CD4-positive, alpha-beta T cell (primary cell): ENCODE measurements at regions of chr9 and their contacts with region 1.

Region 1: DNA sequence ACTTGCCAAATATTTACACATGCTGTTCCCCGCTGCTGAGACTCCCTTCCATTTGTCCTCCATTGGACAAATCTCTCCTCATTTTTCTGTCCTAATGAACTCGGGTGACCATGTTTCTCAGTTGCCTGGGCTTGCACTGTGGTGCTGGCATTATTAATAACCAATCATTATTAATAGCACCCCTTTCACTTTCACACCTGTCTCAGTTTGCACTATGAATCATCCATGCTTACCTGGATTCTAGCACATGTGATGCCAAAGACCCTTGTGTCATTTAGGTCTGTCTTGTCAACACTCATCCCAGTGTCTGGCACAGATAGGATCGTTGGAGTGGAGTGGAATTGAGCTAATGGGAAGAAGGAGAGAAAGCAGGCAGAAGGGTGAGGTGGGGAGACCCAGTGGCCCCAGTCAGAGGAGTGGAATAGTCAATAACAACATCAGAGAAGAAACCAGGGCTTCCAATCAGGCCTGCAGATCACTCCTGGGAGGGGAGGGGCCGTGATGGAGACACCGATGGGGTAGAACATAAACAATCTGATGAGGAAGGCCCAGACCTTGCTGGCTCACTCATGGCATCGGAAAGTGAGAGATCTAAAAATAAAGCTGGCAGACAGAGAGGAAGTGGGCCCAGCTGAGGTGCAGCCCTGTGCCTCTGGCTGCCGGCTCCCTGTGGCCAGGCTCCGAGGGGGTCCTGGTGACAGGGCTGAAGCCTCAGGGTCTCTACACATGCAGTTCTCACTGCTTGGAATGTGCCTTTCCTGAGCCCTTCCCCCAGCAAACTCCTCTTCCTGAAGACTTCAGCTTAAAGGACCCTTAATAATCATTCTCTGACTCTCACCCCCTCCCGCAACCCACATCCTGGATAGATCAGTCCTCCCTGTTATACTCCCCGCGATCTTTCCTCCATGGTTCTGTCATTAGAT is 33.5 kb upstream of the CRB2 start:
- DNase-seq: peak; percentile 36 to 82 (median 63)
- ATAC-seq: peak; percentile 85
- H3K4me3 ChIP-seq: peak overlapping the region; percentile 33
- H3K4me3 Mint-ChIP-seq: peak overlapping the region; percentile 38
- H3K27ac ChIP-seq: peak overlapping the region; percentile 66 to 73
- H3K27ac Mint-ChIP-seq: peak overlapping the region; percentile 97
- H3K4me1 ChIP-seq: peaks cover 32% of the 10 kb centered on the region
- H3K4me1 Mint-ChIP-seq: peaks cover 45% of the 10 kb centered on the region
- H3K27me3 ChIP-seq: no peaks in the 10 kb centered on the region
- H3K27me3 Mint-ChIP-seq: no peaks in the 10 kb centered on the region
- CTCF ChIP-seq: no peak

Region 2: DNA sequence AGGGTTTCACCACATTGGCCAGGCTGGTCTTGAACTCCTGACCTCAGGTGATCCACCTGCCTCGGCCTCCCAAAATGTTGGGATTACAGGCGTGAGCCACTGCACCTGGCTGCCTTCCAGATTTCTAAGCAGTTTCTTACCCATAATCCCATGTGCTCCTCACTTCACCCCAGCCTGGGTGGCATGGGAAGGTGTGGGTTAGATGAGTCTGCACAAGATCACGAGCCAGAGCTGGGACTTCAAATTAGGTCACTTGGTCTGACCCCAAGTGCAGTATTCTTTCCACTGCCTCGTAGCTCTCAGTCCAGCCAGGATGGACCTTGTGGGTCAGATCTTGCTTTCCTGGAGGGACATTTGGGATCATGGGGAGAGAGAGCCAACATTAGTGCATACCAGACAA is 16.7 kb before region 1 on chr9:
- CTCF ChIA-PET with region 1: no interaction called
- POLR2A ChIA-PET with region 1: interaction called, 16 read pairs
- intact Hi-C with region 1: loop called in 1 of 2 experiments (anchors 2 kb)
- DNase-seq: no peak
- ATAC-seq: no peak
- H3K4me3 ChIP-seq: no peak overlapping the region
- H3K4me3 Mint-ChIP-seq: no peak overlapping the region
- H3K27ac ChIP-seq: no peak overlapping the region
- H3K27ac Mint-ChIP-seq: peak overlapping the region; percentile 81
- H3K4me1 ChIP-seq: peaks cover 33% of the 10 kb centered on the region
- H3K4me1 Mint-ChIP-seq: peaks cover 37% of the 10 kb centered on the region
- H3K27me3 ChIP-seq: no peaks in the 10 kb centered on the region
- H3K27me3 Mint-ChIP-seq: no peaks in the 10 kb centered on the region
- CTCF ChIP-seq: no peak

Region 3: DNA sequence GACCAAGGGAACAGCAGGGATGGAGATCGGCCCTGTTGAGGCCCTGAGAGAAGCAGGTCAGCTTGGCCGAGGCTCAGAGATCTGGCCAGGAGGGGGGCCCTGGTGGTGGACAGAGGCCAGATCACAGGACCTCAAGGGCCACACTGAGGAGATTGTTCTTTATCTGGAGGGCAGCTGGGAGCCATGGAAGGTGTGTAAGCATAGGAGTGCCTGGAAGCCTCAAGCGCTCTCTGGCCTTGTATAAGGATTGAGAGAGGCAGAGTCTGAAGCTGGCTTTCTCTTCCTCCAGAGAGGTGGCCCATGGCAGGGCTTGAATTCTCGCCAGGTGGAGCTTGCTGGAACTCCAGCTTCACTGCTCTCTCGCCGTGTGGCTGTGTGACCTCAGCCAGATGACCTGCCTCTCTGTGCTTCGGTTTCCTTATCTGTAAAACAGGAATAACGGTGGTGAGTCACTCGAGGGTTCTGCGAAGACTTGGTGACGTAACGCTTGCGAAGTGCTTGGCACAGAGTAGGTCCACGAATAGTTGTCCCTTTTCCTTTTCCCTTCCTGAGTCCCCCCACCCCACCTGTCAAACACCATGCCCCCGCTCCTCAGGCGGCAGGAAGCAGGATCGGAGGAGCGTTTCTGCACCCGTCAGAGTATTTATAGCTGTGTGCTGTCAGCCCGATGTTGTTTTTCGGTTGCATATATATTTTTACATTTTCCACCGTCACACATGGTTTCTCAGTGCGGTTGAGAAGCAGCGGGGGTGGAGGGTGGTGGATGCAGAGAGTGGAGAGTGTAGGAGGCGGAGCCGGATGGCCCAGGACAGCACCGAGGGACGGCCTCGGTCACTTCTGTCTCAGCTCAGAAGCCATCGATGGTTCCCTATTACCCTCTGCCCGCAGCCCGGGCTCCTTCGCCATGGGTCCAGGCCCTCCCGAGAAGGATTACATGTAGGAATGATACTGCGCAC is 16.5 kb after region 1 on chr9:
- CTCF ChIA-PET with region 1: interaction called, 3 read pairs
- POLR2A ChIA-PET with region 1: interaction called, 8 read pairs
- intact Hi-C with region 1: loop called in 1 of 2 experiments (anchors 2 kb)
- DNase-seq: peak; percentile 8 to 75 (median 32)
- ATAC-seq: peak; percentile 73
- H3K4me3 ChIP-seq: peak overlapping the region; percentile 69
- H3K4me3 Mint-ChIP-seq: peak overlapping the region; percentile 89
- H3K27ac ChIP-seq: peak overlapping the region; percentile 18 to 35
- H3K27ac Mint-ChIP-seq: peak overlapping the region; percentile 85
- H3K4me1 ChIP-seq: peaks cover 29% of the 10 kb centered on the region
- H3K4me1 Mint-ChIP-seq: peaks cover 36% of the 10 kb centered on the region
- H3K27me3 ChIP-seq: no peaks in the 10 kb centered on the region
- H3K27me3 Mint-ChIP-seq: no peaks in the 10 kb centered on the region
- CTCF ChIP-seq: no peak